Dorsolateral prefrontal cortex (tissue), 120 donors: ENCODE measurements at regions of chr14 and their contacts with region 1.

Region 1: DNA sequence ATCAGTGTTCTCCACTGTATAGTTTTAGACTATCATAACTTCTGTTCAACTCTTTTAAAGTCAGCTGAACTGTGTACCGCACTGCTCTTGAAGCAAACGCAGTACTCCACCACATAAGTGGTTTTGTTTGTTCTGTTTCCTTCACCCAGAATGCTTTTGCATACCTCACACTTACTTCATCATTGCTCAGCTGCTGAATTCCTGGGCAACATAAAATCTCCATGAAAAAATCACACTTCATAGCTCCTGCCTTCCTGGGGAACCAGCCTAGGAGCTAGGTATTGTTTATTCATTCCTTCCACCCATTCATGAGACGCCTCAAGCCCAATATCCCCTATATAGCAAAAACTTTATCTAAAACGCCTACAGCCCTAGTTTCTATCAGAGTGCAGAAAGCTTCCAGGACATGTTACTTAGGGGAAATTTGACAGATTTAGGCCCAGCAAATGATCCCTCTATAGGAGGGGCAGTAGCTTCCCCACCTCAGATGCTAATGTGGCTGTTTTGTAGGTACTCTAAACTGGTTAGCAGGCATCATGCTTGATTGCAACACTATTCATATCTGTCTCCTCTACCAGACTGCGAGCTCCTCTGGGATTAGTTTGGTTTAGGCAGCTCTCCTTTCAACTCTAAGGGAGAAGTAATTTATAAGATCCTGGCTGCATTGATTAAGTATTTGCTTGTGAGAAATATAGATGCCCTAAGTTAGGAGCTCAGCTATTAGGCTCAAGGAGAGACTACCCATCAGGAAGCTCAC is 44.5 kb downstream of the LRRC9 start:
- DNase-seq: no peak
- H3K4me3 ChIP-seq: peak overlapping the region in 39 of 59 donors; percentile 38 to 72 (median 57)
- H3K27ac ChIP-seq: peak overlapping the region in 12 of 59 donors; percentile 1 to 92 (median 67)
- H3K27me3 ChIP-seq: no peaks in the 10 kb centered on the region
- CTCF ChIP-seq: no peak

Region 2: GRCh38 chr14:59761851-59762250 is 202.6 kb before region 1 on chr14:
- intact Hi-C with region 1: no loop called
- DNase-seq: no peak
- H3K4me3 ChIP-seq: no peak overlapping the region
- H3K27ac ChIP-seq: no peak overlapping the region
- H3K27me3 ChIP-seq: no peaks in the 10 kb centered on the region
- CTCF ChIP-seq: no peak

Region 3: GRCh38 chr14:59811815-59812214 is 152.6 kb before region 1 on chr14:
- intact Hi-C with region 1: no loop called
- DNase-seq: no peak
- H3K4me3 ChIP-seq: no peak overlapping the region
- H3K27ac ChIP-seq: no peak overlapping the region
- H3K27me3 ChIP-seq: no peaks in the 10 kb centered on the region
- CTCF ChIP-seq: no peak

Region 4: DNA sequence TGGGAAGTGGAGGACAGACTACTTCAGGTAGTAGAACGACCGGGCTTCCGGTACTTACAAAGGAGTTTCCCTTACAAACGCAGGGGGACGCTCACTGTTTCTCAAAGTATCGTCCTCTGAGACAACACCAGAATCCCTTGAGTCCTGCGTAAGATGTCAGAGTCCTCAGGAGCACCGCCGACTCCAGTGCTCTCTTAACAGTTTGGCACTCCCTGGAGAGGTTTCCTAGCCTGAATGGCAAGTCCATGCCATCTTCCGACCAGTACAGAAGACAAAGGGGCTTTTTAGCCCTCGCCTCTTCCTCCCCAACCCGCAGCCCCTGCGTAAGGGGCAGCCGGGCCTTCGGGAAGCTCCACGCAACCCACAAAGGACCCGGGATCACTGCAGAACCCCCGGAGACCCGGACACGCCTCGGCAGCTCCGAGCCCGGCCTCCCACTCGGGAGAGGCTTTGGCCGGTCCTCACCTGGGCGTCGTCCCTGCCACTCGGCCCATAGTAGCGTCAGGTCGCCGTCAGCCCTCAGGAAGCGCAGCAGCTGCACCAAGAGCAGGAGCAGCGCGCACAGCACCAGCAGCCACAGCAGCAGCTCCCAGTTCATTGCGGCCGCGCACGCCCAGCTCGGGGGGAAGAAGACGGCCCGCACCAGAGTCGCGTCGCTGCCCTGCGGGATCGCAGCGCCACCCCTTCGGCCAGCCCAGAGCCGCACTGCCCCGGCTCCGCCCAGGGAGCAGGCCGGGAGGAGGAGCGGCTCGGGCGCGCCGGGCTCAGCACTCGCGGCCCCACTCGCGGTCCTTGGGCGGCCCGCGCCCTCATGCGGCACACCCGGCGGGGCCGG is 200.5 kb after region 1 on chr14 and contains the start of gene DHRS7:
- intact Hi-C with region 1: loop called (anchors 1 to 5 kb)
- DNase-seq: peak; percentile 72 to 89 (median 82)
- H3K4me3 ChIP-seq: peak within 1 kb of the TSS; percentile 62 to 99 (median 88)
- H3K27ac ChIP-seq: peak within 1 kb of the TSS; percentile 81 to 99 (median 95)
- H3K27me3 ChIP-seq: no peaks in the 10 kb centered on the region
- CTCF ChIP-seq: peak in 54 of 56 donors; percentile 7 to 92 (median 69)
- total RNA-seq, gene DHRS7: 37.5 to 72.7 (median 57.7) TPM

Region 5: GRCh38 chr14:60184146-60184904 is 219.9 kb after region 1 on chr14:
- intact Hi-C with region 1: loop called in 1 of 2 experiments (anchors 2 kb)
- DNase-seq: no peak
- H3K4me3 ChIP-seq: peak overlapping the region; percentile 20 to 71 (median 54)
- H3K27ac ChIP-seq: peak overlapping the region in 37 of 59 donors; percentile 3 to 77 (median 42)
- H3K27me3 ChIP-seq: no peaks in the 10 kb centered on the region
- CTCF ChIP-seq: peak; percentile 69 to 98 (median 88)

Region 6: DNA sequence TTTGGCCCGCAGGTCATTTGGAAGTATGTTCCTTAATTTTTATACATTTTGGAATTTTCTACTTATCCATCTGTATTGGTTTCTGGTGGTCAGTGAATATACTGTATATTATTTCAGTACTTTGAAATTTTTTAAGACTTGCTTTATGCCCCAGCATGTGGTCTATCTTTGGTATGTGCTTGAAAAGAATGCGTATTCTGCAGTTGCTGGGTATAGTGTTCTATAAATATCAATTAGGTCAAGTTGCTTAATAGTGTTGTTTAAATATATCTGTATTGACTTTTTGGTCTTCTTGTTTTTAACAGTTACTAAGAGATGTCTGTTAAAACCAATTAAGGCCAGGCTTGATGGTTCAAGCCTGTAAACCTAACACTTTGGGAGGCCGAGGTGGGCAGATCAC is 706.6 kb after region 1 on chr14:
- intact Hi-C with region 1: no loop called
- DNase-seq: no peak
- H3K4me3 ChIP-seq: no peak overlapping the region
- H3K27ac ChIP-seq: no peak overlapping the region
- H3K27me3 ChIP-seq: peaks cover 0 to 6% (median 0%) of the 10 kb centered on the region in 45 donors
- CTCF ChIP-seq: no peak